BJ (cell line): ENCODE measurements at regions of chr17 and their contacts with region 1.

Region 1: GRCh38 chr17:28726226-28727130 is at the start of gene TLCD1:
- DNase-seq: peak; percentile 65
- H3K4me3 ChIP-seq: peak within 1 kb of the TSS; percentile 71
- H3K27me3 ChIP-seq: no peaks in the 10 kb centered on the region
- CTCF ChIP-seq: peak; percentile 99
- polyA plus RNA-seq, gene TLCD1: 9.4 and 9.8 TPM in 2 replicates

Region 2: GRCh38 chr17:28710861-28711722 is 15.4 kb before region 1 on chr17:
- CTCF ChIA-PET with region 1: interaction called, 21 read pairs
- POLR2A ChIA-PET with region 1: interaction called, 4 read pairs
- DNase-seq: peak; percentile 49
- H3K4me3 ChIP-seq: peak overlapping the region; percentile 56
- H3K27me3 ChIP-seq: no peaks in the 10 kb centered on the region
- CTCF ChIP-seq: no peak

Region 3: DNA sequence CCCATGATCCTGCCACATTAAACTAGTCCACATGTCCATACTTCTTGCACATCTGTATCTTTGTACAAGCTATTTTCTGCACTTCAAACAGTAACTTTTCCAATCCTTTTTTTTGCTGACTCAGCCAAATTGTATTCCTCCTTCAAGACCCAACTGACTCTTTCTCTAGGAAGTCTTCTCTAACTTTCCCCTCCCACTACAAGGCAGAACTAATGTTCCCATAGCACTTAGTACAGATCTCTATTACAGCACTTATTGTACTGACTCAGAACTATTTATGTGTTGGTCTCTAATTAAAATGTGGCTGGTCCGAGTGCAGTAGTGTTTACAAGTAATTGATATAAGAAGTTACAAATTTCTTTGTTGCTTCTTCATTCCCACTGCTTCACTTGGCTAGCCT is 107.9 kb after region 1 on chr17:
- CTCF ChIA-PET with region 1: no interaction called
- POLR2A ChIA-PET with region 1: no interaction called
- DNase-seq: no peak
- H3K4me3 ChIP-seq: no peak overlapping the region
- H3K27me3 ChIP-seq: no peaks in the 10 kb centered on the region
- CTCF ChIP-seq: no peak

Region 4: DNA sequence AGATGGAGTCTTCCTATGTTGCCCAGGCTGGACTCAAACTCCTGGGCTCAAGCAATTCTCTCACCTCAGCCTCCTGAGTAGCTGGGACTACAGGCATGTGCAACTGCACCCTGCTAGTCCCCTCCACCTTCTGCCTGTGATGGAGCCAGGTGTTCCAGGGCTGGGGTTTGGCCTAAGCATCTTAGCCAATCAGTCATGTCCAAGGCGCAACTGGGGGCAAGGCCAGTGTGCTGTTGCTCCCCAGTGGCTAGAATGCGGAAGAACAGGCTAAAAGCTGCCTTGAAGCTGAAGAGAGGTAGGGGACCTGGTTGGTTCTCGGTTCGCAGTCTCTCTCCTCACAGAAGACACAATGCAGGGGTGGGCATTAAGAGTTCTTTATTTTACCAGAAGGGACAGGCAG is 152.5 kb after region 1 on chr17:
- CTCF ChIA-PET with region 1: interaction called, 11 read pairs
- POLR2A ChIA-PET with region 1: no interaction called
- DNase-seq: no peak
- H3K4me3 ChIP-seq: no peak overlapping the region
- H3K27me3 ChIP-seq: no peaks in the 10 kb centered on the region
- CTCF ChIP-seq: peak; percentile 59

Region 5: DNA sequence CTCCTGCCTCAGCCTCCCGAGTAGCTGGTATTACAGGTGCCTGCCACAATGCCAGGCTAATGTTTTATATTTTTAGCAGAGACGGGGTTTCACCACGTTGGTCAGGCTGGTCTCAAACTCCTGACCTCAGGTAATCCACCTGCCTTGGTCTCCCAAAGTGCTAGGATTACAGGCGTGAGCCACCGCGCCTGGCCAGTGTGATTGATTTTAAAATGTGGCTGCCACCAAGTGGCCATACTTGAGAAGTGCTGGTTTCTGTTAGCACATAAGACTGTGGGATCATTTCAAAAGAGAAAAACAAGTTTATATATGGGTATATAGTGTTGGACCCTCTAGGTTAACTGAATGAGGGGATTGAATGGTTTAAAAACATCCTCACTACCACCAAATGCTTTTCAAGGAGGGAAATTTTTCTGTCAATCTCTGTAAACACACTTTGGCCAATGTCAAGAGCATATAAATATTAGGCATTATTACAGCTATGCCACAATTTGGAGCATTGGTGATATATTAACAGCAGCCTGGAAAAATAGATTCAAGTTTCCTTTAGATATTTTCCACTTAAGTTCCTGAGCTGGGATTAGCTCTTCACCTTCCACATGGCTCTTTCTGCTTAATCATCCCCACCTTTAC is 189.9 kb after region 1 on chr17:
- CTCF ChIA-PET with region 1: interaction called, 48 read pairs
- POLR2A ChIA-PET with region 1: no interaction called
- DNase-seq: no peak
- H3K4me3 ChIP-seq: no peak overlapping the region
- H3K27me3 ChIP-seq: no peaks in the 10 kb centered on the region
- CTCF ChIP-seq: peak; percentile 64

Region 6: GRCh38 chr17:28951991-28952975 is 225.8 kb after region 1 on chr17:
- CTCF ChIA-PET with region 1: interaction called, 61 read pairs
- POLR2A ChIA-PET with region 1: no interaction called
- DNase-seq: peak; percentile 98
- H3K4me3 ChIP-seq: peak overlapping the region; percentile 49
- H3K27me3 ChIP-seq: no peaks in the 10 kb centered on the region
- CTCF ChIP-seq: no peak

Region 7: DNA sequence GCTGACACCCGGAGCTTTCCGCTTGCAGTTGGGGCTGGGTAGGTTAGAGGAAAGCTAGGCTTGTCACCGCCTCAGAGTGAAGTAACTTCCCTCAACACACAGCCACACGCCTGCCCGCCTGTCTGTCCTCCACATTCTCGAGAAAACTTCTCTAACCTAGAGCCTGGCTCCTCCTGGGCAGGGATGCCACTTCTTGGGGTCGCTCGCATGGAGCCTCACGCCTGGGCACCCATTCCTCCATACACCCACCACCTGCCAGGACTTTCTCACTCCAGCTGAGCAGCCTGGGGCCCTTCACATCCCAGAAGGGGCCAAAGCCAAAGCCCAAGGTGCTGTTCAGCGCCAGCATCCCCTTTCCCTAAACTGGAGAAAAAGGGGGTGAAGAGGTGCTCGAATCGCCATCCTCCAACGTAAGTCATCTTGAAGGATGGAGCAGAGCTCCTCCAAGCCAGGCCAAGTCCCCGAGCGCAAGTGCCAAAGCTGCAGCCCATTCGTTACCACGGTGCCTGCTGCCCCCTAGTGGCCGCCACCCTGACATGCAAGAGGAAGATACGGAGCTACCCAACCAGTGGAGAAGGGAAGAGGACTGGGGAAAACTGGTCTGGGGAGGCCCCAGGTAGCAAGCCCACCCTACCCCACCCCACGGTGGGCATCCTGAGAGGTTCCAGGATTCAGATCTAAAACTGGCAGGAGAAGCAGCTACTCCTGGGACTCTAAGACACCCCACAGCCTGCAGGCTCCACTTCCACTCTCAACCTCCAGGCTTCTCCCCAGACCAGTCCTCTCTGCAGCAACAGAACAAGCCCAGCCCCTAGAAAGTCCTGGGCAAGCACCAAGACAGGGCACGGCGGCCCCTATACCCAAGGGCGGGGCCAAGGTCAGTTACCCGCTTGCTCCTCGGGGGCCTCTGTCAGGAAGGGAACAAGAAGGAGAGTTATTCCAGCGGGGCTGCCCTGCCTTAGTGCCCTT is 390.6 kb after region 1 on chr17:
- CTCF ChIA-PET with region 1: interaction called, 18 read pairs
- POLR2A ChIA-PET with region 1: no interaction called
- DNase-seq: no peak
- H3K4me3 ChIP-seq: no peak overlapping the region
- H3K27me3 ChIP-seq: no peaks in the 10 kb centered on the region
- CTCF ChIP-seq: peak; percentile 94